PC-3 (cell line): ENCODE measurements at regions of chr3 and their contacts with region 1.

Region 1: GRCh38 chr3:32238453-32239306 is at the start of gene CMTM8:
- DNase-seq: peak; percentile 78
- ATAC-seq: peak; percentile 84
- H3K4me3 ChIP-seq: peak within 1 kb of the TSS; percentile 92
- H3K27ac ChIP-seq: no peak within 1 kb of the TSS
- H3K4me1 ChIP-seq: peaks cover 17% of the 10 kb centered on the region
- H3K27me3 ChIP-seq: no peaks in the 10 kb centered on the region
- CTCF ChIP-seq: no peak
- total RNA-seq, gene CMTM8: 1.4 and 5.2 TPM in 2 replicates

Region 2: GRCh38 chr3:32200490-32200889 is 38.2 kb before region 1 on chr3:
- CTCF ChIA-PET with region 1: no interaction called
- POLR2A ChIA-PET with region 1: no interaction called
- intact Hi-C with region 1: no loop called
- DNase-seq: no peak
- ATAC-seq: no peak
- H3K4me3 ChIP-seq: no peak overlapping the region
- H3K27ac ChIP-seq: no peak overlapping the region
- H3K4me1 ChIP-seq: peaks cover 6% of the 10 kb centered on the region; the same call in 1 of the 2 replicates
- H3K27me3 ChIP-seq: no peaks in the 10 kb centered on the region
- CTCF ChIP-seq: no peak

Region 3: GRCh38 chr3:32249184-32249782 is 10.6 kb after region 1 on chr3:
- CTCF ChIA-PET with region 1: interaction called, 3 read pairs
- POLR2A ChIA-PET with region 1: no interaction called
- intact Hi-C with region 1: loop called (anchors 1 kb)
- DNase-seq: peak; percentile 93
- ATAC-seq: peak; percentile 76
- H3K4me3 ChIP-seq: no peak overlapping the region
- H3K27ac ChIP-seq: peak overlapping the region; percentile 84
- H3K4me1 ChIP-seq: peaks cover 34% of the 10 kb centered on the region
- H3K27me3 ChIP-seq: no peaks in the 10 kb centered on the region
- CTCF ChIP-seq: no peak

Region 4: DNA sequence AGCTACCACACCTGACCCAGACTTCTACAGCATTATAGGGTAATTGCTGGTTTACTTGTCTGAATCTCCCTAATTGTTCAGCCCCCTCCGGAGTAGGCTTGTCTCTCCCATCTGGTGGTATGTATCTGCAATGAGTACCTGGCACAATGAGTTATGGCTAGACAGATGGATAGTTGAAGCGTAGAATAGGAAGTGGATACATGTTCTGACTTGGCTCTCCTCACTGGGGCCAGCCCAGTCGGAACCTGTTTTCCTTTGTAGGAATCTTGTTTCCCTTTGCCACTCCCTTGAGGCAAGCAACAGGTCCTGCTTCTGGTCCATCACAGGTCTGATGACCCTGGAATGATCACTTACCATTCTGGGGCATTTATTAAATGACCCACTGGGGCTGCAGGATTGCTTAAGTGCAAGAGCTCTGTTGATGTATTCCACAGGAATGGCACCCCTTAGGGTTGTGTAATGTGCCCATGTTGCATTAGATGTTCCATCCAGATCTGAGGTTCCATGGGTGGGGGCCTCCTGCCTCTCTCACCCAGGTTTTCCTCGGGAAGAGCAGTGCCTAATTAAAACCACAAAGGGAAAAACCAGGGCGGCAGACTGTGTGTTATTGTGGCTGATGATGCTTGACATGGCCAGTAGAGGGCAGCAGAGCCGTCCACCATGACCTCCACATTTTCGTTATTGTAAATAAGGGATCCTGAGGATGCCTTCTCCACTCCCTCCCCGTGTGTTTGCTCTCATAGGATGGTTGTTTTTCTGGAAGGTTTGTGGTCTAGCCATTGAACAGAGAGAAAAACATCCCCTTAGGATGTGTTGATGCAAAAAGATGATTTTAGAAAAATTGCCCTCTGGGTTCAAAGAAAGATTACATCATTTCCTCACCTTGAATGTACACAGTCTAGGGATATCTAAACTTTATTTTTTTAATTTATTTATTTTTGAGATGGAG is 57.9 kb after region 1 on chr3:
- CTCF ChIA-PET with region 1: no interaction called
- POLR2A ChIA-PET with region 1: no interaction called
- intact Hi-C with region 1: loop called (anchors 5 kb)
- DNase-seq: peak; percentile 73
- ATAC-seq: peak; percentile 94
- H3K4me3 ChIP-seq: no peak overlapping the region
- H3K27ac ChIP-seq: no peak overlapping the region
- H3K4me1 ChIP-seq: 0 out of 2 replicates have a peak, but pooled peaks cover 2% of the 10 kb centered on the region
- H3K27me3 ChIP-seq: no peaks in the 10 kb centered on the region
- CTCF ChIP-seq: peak; percentile 93

Region 5: DNA sequence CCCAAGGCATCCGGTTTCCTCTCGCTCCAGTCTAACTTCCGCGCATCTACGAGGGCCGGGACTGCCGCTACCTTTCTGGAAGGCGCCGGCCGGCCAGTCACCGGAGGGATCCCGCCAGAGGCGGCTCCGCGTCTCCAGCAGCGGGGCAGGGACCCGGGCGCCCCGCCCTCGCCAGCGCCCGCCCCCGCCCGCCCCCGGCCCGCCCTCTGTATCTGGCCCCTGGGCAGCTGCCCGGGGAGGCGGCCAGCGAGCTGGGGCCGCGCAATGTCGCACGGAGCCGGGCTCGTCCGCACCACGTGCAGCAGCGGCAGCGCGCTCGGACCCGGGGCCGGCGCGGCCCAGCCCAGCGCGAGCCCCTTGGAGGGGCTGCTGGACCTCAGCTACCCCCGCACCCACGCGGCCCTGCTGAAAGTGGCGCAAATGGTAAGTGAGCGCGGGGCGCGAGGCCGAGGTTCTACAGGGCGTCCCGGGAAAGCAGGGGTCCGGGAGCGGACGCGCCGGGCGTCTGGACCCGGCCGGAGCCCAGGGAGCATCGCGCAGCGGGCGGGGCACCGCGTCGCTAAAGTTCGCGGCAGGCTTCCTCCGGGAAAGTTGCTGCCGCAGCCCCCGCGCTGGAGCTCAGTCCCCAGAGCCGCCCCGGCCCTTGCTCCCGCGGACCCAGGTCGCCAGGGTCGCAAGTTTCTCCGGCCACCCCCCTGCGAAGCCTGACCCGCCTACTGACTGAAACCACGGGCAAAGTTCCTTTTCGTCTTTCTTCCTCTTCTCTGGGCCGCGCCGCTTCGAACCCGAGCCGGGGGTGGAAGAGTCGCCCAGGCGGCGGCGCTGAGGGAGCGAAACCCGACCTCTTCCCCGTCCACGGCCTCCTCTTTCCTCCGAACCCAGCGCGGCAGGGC is 153.2 kb after region 1 on chr3 and contains the start of gene CMTM7:
- CTCF ChIA-PET with region 1: no interaction called
- POLR2A ChIA-PET with region 1: no interaction called
- intact Hi-C with region 1: loop called (anchors 5 kb)
- DNase-seq: peak; percentile 89
- ATAC-seq: peak; percentile 83
- H3K4me3 ChIP-seq: peak within 1 kb of the TSS; percentile 99
- H3K27ac ChIP-seq: peak within 1 kb of the TSS; percentile 77
- H3K4me1 ChIP-seq: peaks cover 27% of the 10 kb centered on the region
- H3K27me3 ChIP-seq: no peaks in the 10 kb centered on the region
- CTCF ChIP-seq: no peak
- total RNA-seq, gene CMTM7: 37.1 and 71.0 TPM in 2 replicates

Region 6: DNA sequence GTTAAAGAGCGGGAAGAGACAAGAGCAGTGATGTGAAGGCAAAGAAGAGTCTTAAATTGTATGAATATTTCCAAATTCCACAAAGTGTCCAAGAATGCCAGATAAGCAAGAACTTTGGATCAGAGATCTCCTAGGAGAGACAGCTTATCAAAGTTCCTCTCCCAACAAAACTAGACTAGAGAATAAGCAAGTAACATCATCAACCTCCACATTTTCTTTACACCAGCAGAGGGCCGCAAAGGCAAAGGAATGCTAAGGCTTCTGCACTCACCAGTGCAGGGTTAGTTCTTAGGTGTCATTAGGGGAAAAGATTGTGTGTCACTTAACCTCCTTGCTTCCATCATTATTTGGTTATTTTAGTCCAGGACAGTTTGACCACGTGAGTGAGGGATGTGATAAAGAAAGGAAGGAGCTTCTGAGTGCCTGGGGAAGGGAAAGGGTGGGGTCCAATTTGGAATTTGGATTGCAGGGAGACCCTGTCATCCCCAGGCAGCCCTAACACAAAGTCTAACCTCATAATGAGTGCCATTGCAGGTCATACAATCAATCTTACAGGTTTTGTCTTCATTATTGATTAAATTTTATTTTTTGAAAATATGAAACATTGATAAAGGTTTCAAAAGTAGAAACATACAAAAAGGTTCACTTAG is 271.5 kb after region 1 on chr3:
- CTCF ChIA-PET with region 1: no interaction called
- POLR2A ChIA-PET with region 1: no interaction called
- intact Hi-C with region 1: no loop called
- DNase-seq: peak; percentile 86
- ATAC-seq: peak; percentile 99
- H3K4me3 ChIP-seq: no peak overlapping the region
- H3K27ac ChIP-seq: no peak overlapping the region
- H3K4me1 ChIP-seq: no peaks in the 10 kb centered on the region
- H3K27me3 ChIP-seq: no peaks in the 10 kb centered on the region
- CTCF ChIP-seq: peak; percentile 94